Pancreas (tissue), 10 donors: ENCODE measurements at regions of chr1 and their contacts with region 1.

Region 1: DNA sequence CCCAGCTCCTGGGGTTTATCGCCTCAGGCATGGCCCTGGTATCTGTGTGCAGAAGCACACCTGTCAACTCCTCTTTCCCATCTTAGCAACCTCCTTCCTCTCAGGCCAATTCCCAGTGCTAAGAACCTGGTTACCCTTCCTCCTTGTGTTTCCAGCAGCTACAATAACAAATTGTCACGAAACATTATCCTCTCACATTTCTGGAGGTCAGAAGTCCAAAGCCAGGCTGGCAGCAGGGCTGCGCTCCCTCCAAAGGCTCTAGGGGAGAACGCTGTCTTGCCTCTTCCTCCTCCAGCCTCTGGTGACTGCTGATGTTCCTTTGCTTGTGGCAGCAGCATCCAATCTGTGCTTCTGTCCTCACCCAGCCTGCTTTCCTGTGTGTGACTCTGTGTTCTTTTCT is 10.7 kb upstream of the MRPS14 start:
- DNase-seq: no peak
- ATAC-seq: no peak
- H3K4me3 ChIP-seq: no peak overlapping the region
- H3K27ac ChIP-seq: no peak overlapping the region
- H3K4me1 ChIP-seq: peaks cover 3 to 5% (median 3%) of the 10 kb centered on the region in 3 donors
- H3K27me3 ChIP-seq: no peaks in the 10 kb centered on the region
- CTCF ChIP-seq: no peak

Region 2: GRCh38 chr1:175090780-175091179 is 56.8 kb after region 1 on chr1:
- intact Hi-C with region 1: no loop called
- DNase-seq: no peak
- ATAC-seq: no peak
- H3K4me3 ChIP-seq: no peak overlapping the region
- H3K27ac ChIP-seq: no peak overlapping the region
- H3K4me1 ChIP-seq: no peaks in the 10 kb centered on the region
- H3K27me3 ChIP-seq: no peaks in the 10 kb centered on the region
- CTCF ChIP-seq: no peak

Region 3: GRCh38 chr1:175124861-175125260 is 90.9 kb after region 1 on chr1:
- intact Hi-C with region 1: loop called in 1 of 3 experiments (anchors 5 kb)
- DNase-seq: no peak
- ATAC-seq: peak in 1 of 4 donors; percentile 19
- H3K4me3 ChIP-seq: no peak overlapping the region
- H3K27ac ChIP-seq: no peak overlapping the region
- H3K4me1 ChIP-seq: no peaks in the 10 kb centered on the region
- H3K27me3 ChIP-seq: no peaks in the 10 kb centered on the region
- CTCF ChIP-seq: no peak